ENCODE measurements at regions of chr9 and their contacts with region 1.

Region 1: GRCh38 chr9:127611899-127612790 is at the start of gene STXBP1:
- DNase-seq: peak; percentile 91
- ATAC-seq: peak; percentile 94
- H3K4me3 ChIP-seq: peak within 1 kb of the TSS; percentile 55 to 84 (median 60)
- H3K4me3 Mint-ChIP-seq: peak within 1 kb of the TSS; percentile 98
- H3K27ac ChIP-seq: no peak within 1 kb of the TSS
- H3K27ac Mint-ChIP-seq: peak within 1 kb of the TSS; percentile 80
- H3K4me1 ChIP-seq: peaks cover 28 to 31% of the 10 kb centered on the region in 2 donors
- H3K4me1 Mint-ChIP-seq: peaks cover 25% of the 10 kb centered on the region
- H3K27me3 ChIP-seq: peaks cover 0 to 39% (median 33%) of the 10 kb centered on the region in 4 experiments
- H3K27me3 Mint-ChIP-seq: peaks cover 44% of the 10 kb centered on the region
- CTCF ChIP-seq: no peak
- total RNA-seq, gene STXBP1: 0.62 and 0.78 TPM in 2 replicates

Region 2: DNA sequence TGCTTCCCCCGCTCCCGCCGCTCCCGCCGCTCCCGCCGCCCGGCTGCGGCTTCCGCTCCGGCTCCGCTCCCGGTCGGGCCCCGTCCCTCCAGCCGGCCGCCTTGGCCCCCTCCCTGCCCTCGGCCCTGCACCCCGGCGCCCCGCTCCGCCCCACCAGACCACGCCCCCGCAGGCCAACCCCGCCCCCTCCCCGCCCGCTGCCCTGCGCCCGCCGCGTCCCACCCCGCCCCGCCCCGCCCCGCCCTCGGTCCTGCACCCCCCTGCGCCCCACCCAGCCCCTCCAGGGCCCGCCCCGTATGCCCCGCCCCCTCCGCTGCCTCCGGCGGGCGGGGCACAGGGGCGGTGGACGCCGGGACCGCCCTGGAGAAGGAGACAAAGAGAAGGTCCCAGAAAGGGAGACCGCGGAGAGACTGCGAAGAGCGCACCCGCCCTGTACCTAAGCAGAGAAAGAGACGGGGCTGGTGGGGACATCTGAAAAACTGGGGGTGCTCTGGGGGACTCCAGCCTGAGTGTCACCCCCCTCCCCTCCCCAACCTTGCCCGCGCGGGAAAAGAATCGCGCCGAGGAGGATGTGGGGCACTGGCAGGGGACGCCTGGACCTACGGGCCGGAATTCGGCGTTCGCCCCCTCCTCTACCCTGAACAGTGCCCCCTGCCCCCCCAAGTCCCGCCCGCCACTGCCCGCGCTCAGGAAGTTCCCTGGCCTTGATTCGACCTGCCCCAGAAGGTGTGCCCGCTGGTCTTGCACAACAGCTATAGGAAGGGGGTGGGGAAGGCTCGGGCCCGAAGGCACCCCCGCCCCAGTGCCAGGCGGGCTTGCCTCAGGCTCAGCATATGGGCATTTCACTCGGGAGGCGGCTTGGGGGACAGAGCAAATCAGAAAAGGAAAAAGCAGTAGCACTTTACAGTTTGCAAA is 42.9 kb before region 1 on chr9:
- CTCF ChIA-PET with region 1: no interaction called
- POLR2A ChIA-PET with region 1: no interaction called
- intact Hi-C with region 1: loop called (anchors 1 kb)
- DNase-seq: peak; percentile 80
- ATAC-seq: peak; percentile 92
- H3K4me3 ChIP-seq: peak overlapping the region in 4 of 5 experiments; percentile 53 to 72 (median 65)
- H3K4me3 Mint-ChIP-seq: peak overlapping the region; percentile 93
- H3K27ac ChIP-seq: no peak overlapping the region
- H3K27ac Mint-ChIP-seq: peak overlapping the region; percentile 81
- H3K4me1 ChIP-seq: peaks cover 18 to 24% of the 10 kb centered on the region in 2 donors
- H3K4me1 Mint-ChIP-seq: peaks cover 14% of the 10 kb centered on the region
- H3K27me3 ChIP-seq: peaks cover 0 to 7% (median 0%) of the 10 kb centered on the region in 4 experiments
- H3K27me3 Mint-ChIP-seq: no peaks in the 10 kb centered on the region
- CTCF ChIP-seq: no peak

Region 3: GRCh38 chr9:127698985-127699670 is 87.0 kb after region 1 on chr9:
- CTCF ChIA-PET with region 1: no interaction called
- POLR2A ChIA-PET with region 1: no interaction called
- intact Hi-C with region 1: loop called (anchors 1 kb)
- DNase-seq: peak; percentile 92
- ATAC-seq: peak; percentile 100
- H3K4me3 ChIP-seq: peak overlapping the region; percentile 34 to 59 (median 46)
- H3K4me3 Mint-ChIP-seq: peak overlapping the region; percentile 82
- H3K27ac ChIP-seq: peak overlapping the region in 1 of 2 donors; percentile 67
- H3K27ac Mint-ChIP-seq: peak overlapping the region; percentile 65
- H3K4me1 ChIP-seq: peaks cover 6 to 12% of the 10 kb centered on the region in 2 donors
- H3K4me1 Mint-ChIP-seq: peaks cover 14% of the 10 kb centered on the region
- H3K27me3 ChIP-seq: no peaks in the 10 kb centered on the region
- H3K27me3 Mint-ChIP-seq: no peaks in the 10 kb centered on the region
- CTCF ChIP-seq: peak; percentile 19